PC-9 (cell line): ENCODE measurements at regions of chr12 and their contacts with region 1.

Region 1: DNA sequence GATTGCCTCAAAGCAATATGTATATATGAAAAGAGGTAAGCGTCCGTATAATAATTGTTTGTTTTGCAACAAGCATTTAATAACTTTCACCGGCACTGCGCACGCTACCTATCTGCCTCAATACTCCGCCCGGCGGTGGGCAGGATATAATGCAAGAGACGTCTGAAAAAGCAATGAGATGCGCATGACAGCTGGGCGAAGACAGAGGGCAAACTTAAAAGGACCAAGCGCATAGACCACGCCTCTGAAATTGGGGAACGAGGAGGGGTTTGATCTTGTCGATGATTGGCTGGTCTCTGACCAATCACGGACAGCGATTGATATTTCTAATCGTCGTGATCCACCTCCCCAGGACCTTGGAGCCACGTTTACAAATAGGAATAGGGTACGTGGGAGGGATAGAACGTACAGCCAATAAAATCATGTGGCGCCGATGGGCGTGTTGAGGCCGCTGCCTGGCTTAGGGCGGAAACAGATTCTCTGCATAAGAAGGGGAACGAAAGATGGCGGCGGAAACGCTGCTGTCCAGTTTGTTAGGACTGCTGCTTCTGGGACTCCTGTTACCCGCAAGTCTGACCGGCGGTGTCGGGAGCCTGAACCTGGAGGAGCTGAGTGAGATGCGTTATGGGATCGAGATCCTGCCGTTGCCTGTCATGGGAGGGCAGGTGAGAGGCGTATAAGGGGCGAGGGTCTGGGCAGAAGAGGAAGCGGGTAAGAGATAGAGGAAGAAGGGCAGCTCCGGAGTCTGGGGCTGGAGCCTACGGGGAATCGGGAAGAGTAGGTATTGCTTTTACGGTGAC is at the start of gene OS9:
- DNase-seq: peak; percentile 93 to 98
- H3K4me3 ChIP-seq: peak within 1 kb of the TSS; percentile 73
- H3K27ac ChIP-seq: no peak within 1 kb of the TSS
- H3K4me1 ChIP-seq: peaks cover 13% of the 10 kb centered on the region
- H3K27me3 ChIP-seq: peaks cover 12% of the 10 kb centered on the region; the same call in 1 of the 2 replicates
- CTCF ChIP-seq: peak; percentile 73
- total RNA-seq, gene OS9: 96.7 and 108 TPM in 2 replicates

Region 2: GRCh38 chr12:57462251-57462911 is 231.5 kb before region 1 on chr12:
- CTCF ChIA-PET with region 1: interaction called, 3 read pairs
- POLR2A ChIA-PET with region 1: no interaction called
- intact Hi-C with region 1: loop called (anchors 2 kb)
- DNase-seq: peak; percentile 74 to 88
- H3K4me3 ChIP-seq: peak overlapping the region; percentile 57
- H3K27ac ChIP-seq: no peak overlapping the region
- H3K4me1 ChIP-seq: peaks cover 23% of the 10 kb centered on the region
- H3K27me3 ChIP-seq: peaks cover 62% of the 10 kb centered on the region
- CTCF ChIP-seq: peak; percentile 92

Region 3: DNA sequence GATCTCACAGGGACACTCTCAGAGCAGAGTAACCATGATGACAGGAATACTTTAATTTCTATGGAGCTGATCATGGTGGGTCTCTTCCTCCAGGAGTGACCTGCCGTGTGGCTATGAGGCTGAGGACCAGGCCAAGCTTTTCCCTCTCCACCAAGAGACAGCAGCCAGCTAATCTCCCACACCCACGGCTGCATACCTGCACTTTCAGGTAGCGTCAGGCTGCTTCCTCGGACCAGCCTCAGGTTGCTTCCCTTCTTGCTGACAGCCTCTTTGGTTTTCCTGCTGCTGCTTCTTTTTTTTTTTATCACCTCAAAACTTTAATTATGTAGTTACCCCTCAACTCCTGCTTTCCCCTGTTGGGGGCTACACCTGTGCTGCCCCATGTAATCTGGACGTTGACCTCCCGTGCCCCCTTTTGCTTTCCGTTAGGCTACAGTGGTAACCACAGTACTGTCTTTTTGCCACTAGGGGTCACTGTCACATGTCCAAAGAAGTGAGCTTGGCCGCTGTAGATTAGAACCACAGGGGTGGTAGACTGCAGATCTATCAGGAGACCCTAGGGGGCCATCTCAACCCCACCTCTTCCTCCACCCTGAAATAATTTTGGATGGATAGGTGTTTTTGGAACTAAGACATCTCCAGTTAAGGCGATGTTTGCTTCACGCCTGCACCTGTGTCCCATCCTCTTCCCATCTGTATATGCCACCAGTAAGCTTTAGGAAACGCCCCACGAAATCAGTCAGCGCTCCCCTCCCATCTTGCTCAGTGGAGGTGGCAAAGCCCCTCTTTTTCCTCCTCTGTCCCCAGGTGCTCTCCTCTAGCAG is 110.6 kb before region 1 on chr12:
- CTCF ChIA-PET with region 1: no interaction called
- POLR2A ChIA-PET with region 1: no interaction called
- intact Hi-C with region 1: loop called (anchors 2 kb)
- DNase-seq: peak; percentile 65 to 67
- H3K4me3 ChIP-seq: no peak overlapping the region
- H3K27ac ChIP-seq: no peak overlapping the region
- H3K4me1 ChIP-seq: no peaks in the 10 kb centered on the region
- H3K27me3 ChIP-seq: peaks cover 34% of the 10 kb centered on the region
- CTCF ChIP-seq: peak; percentile 96

Region 4: GRCh38 chr12:57632694-57633477 is 61.0 kb before region 1 on chr12 and contains the start of gene B4GALNT1:
- CTCF ChIA-PET with region 1: no interaction called
- POLR2A ChIA-PET with region 1: no interaction called
- intact Hi-C with region 1: loop called (anchors 5 kb)
- DNase-seq: peak; percentile 40 to 72
- H3K4me3 ChIP-seq: peak within 1 kb of the TSS; percentile 64
- H3K27ac ChIP-seq: no peak within 1 kb of the TSS
- H3K4me1 ChIP-seq: peaks cover 8% of the 10 kb centered on the region; the same call in 1 of the 2 replicates
- H3K27me3 ChIP-seq: no peaks in the 10 kb centered on the region
- CTCF ChIP-seq: peak; percentile 83
- total RNA-seq, gene B4GALNT1: 15.0 and 17.9 TPM in 2 replicates